ENCODE measurements at regions of chr9 and their contacts with region 1.

Region 1: GRCh38 chr9:72193478-72193881 is 44.2 kb downstream of the GDA start:
- DNase-seq: peak in 1 of 2 experiments; percentile 10
- H3K4me3 ChIP-seq: no peak overlapping the region
- H3K27ac ChIP-seq: no peak overlapping the region
- H3K4me1 ChIP-seq: no peaks in the 10 kb centered on the region
- H3K27me3 ChIP-seq: no peaks in the 10 kb centered on the region
- CTCF ChIP-seq: no peak

Region 2: DNA sequence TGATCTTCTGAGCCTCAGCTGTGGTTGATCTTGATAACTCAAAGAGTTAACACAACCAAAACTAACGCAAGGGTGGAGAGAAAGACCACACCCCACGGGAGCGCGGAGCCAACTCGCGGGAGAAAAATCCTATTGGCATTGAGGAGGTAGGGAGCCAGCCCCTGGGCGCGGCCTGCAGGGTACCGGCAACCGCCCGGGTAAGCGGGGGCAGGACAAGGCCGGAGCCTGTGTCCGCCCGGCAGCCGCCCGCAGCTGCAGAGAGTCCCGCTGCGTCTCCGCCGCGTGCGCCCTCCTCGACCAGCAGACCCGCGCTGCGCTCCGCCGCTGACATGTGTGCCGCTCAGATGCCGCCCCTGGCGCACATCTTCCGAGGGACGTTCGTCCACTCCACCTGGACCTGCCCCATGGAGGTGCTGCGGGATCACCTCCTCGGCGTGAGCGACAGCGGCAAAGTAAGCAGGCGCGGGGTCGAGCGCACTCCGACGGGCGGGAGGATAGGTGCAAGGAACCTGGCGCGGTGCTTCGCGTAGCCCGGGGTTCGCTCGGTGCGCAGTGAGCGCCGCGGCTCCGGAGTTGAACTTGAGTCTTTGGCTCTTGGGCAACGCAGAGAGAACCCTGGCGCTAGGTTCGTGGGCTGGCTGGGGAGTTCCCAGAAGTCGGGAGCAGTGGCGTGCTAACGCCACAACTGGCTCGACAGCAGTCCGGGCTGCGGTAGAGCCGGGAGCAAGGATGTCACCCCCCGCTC is 44.1 kb before region 1 on chr9 and contains the start of gene GDA:
- CTCF ChIA-PET with region 1: no interaction called
- POLR2A ChIA-PET with region 1: no interaction called
- intact Hi-C with region 1: no loop called
- DNase-seq: peak; percentile 65 to 90
- H3K4me3 ChIP-seq: peak within 1 kb of the TSS; percentile 68
- H3K27ac ChIP-seq: peak within 1 kb of the TSS; percentile 83
- H3K4me1 ChIP-seq: peaks cover 69% of the 10 kb centered on the region
- H3K27me3 ChIP-seq: no peaks in the 10 kb centered on the region
- CTCF ChIP-seq: no peak
- total RNA-seq, gene GDA: 98.1 and 142 TPM in 2 replicates

Region 3: GRCh38 chr9:72173081-72173480 is 20.4 kb before region 1 on chr9:
- CTCF ChIA-PET with region 1: interaction called, 17 read pairs
- POLR2A ChIA-PET with region 1: no interaction called
- intact Hi-C with region 1: no loop called
- DNase-seq: no peak
- H3K4me3 ChIP-seq: no peak overlapping the region
- H3K27ac ChIP-seq: no peak overlapping the region
- H3K4me1 ChIP-seq: no peaks in the 10 kb centered on the region
- H3K27me3 ChIP-seq: no peaks in the 10 kb centered on the region
- CTCF ChIP-seq: no peak